ENCODE measurements at regions of chr14 and their contacts with region 1.

Region 1: DNA sequence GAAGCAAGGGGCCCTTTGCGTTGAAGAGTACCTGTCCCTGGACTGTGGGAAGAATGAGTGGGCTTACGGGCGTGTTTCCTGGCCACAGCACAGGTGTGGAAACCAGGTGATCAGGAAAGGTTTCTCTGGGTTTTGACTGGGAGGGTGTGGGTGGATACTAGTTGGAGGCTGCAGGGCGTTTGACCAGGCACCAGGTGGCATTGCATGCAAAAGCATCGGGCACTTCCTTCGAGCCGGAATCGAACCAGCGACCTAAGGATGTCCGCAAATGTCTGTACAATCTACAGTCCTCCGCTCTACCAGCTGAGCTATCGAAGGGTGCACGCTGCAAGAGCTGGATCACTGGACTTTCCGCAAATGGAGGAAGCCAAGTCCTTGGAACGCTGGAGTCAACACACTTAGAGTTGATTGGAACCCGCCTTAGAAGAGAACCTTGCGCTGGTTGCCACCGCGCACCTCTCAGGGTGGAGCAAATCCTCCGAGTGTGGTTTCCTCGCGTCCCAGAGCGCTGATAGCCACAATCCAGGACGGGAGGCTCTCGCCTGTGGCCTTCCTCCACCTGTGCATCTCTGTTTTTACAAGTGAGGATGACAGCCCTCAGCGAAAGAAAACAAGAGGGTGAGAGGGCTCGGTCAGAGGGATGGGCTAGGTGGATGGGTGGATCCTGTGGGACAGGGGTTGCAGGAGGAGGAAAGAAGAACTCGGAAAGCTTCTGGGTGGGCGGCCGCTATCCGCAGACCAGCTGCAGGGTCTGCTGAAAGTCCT is 21.2 kb upstream of the RNASE4 start:
- DNase-seq: peak; percentile 61 to 84 (median 71)
- H3K4me3 ChIP-seq: peak overlapping the region; percentile 63
- H3K4me3 Mint-ChIP-seq: peak overlapping the region; percentile 10 to 88 (median 81)
- H3K27ac ChIP-seq: no peak overlapping the region
- H3K27ac Mint-ChIP-seq: peak overlapping the region in 5 of 8 donors; percentile 14 to 36 (median 17)
- H3K4me1 ChIP-seq: peaks cover 19% of the 10 kb centered on the region
- H3K4me1 Mint-ChIP-seq: peaks cover 25 to 30% (median 28%) of the 10 kb centered on the region in 3 donors
- H3K27me3 ChIP-seq: peaks cover 10% of the 10 kb centered on the region
- H3K27me3 Mint-ChIP-seq: peaks cover 15 to 34% of the 10 kb centered on the region in 2 donors

Region 2: DNA sequence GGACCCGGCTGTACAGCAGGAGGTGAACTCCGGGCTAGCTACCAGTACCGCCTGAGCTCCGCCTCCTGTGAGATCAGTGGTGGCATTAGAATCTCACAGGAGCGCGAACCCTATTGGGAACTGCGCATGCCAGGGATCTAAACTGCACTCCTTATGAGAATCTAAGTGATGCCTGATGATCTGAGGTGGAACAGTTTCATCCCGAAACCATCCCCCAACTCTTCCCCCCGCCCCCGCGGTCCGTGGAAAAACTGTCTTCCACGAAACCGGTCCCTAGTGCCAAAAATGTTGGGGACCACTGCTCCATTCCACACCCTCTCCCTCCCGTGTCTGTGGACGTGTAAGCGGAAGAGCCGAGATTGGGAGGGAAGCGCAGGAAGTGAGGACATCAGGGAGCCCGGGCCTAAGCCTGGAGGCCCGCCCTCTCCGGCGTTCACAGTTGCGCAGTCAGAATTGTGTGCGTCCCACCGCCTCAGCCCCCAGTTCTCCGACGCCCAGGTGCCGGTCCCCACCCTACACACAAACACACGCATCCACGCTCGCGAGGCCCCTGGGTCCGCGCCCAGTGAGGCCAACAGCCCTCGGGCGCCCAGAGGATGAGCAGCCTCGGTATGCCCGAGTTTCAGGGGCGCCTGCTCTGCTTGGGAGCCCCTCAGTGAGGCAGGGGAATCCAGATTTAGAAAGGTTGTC is 19.4 kb after region 1 on chr14:
- CTCF ChIA-PET with region 1: interaction called, 35 read pairs
- POLR2A ChIA-PET with region 1: interaction called, 7 read pairs
- DNase-seq: peak; percentile 70 to 89 (median 81)
- H3K4me3 ChIP-seq: peak overlapping the region; percentile 97
- H3K4me3 Mint-ChIP-seq: no peak overlapping the region
- H3K27ac ChIP-seq: peak overlapping the region; percentile 96
- H3K27ac Mint-ChIP-seq: no peak overlapping the region
- H3K4me1 ChIP-seq: peaks cover 25% of the 10 kb centered on the region
- H3K4me1 Mint-ChIP-seq: peaks cover 6 to 10% (median 9%) of the 10 kb centered on the region in 3 donors
- H3K27me3 ChIP-seq: no peaks in the 10 kb centered on the region
- H3K27me3 Mint-ChIP-seq: peaks cover 0 to 4% of the 10 kb centered on the region in 2 donors

Region 3: GRCh38 chr14:20690848-20691523 is 27.8 kb after region 1 on chr14:
- CTCF ChIA-PET with region 1: interaction called, 76 read pairs
- POLR2A ChIA-PET with region 1: interaction called, 3 read pairs
- DNase-seq: peak in 4 of 5 donors; percentile 18 to 65 (median 54)
- H3K4me3 ChIP-seq: no peak overlapping the region
- H3K4me3 Mint-ChIP-seq: peak overlapping the region in 1 of 7 donors; percentile 7
- H3K27ac ChIP-seq: no peak overlapping the region
- H3K27ac Mint-ChIP-seq: peak overlapping the region in 1 of 8 donors; percentile 12
- H3K4me1 ChIP-seq: no peaks in the 10 kb centered on the region
- H3K4me1 Mint-ChIP-seq: peaks cover 4 to 6% (median 5%) of the 10 kb centered on the region in 3 donors
- H3K27me3 ChIP-seq: no peaks in the 10 kb centered on the region
- H3K27me3 Mint-ChIP-seq: peaks cover 7 to 8% of the 10 kb centered on the region in 2 donors

Region 4: GRCh38 chr14:20697273-20698017 is 34.3 kb after region 1 on chr14:
- CTCF ChIA-PET with region 1: interaction called, 76 read pairs
- POLR2A ChIA-PET with region 1: no interaction called
- DNase-seq: peak; percentile 41 to 68 (median 44)
- H3K4me3 ChIP-seq: no peak overlapping the region
- H3K4me3 Mint-ChIP-seq: no peak overlapping the region
- H3K27ac ChIP-seq: no peak overlapping the region
- H3K27ac Mint-ChIP-seq: no peak overlapping the region
- H3K4me1 ChIP-seq: no peaks in the 10 kb centered on the region
- H3K4me1 Mint-ChIP-seq: no peaks in the 10 kb centered on the region
- H3K27me3 ChIP-seq: no peaks in the 10 kb centered on the region
- H3K27me3 Mint-ChIP-seq: peaks cover 5 to 9% of the 10 kb centered on the region in 2 donors

Measured in CD8-positive, alpha-beta memory T cell (primary cell).